Right ventricle myocardium inferior (tissue), 1 donor: ENCODE measurements at regions of chr1 and their contacts with region 1.

Region 1: DNA sequence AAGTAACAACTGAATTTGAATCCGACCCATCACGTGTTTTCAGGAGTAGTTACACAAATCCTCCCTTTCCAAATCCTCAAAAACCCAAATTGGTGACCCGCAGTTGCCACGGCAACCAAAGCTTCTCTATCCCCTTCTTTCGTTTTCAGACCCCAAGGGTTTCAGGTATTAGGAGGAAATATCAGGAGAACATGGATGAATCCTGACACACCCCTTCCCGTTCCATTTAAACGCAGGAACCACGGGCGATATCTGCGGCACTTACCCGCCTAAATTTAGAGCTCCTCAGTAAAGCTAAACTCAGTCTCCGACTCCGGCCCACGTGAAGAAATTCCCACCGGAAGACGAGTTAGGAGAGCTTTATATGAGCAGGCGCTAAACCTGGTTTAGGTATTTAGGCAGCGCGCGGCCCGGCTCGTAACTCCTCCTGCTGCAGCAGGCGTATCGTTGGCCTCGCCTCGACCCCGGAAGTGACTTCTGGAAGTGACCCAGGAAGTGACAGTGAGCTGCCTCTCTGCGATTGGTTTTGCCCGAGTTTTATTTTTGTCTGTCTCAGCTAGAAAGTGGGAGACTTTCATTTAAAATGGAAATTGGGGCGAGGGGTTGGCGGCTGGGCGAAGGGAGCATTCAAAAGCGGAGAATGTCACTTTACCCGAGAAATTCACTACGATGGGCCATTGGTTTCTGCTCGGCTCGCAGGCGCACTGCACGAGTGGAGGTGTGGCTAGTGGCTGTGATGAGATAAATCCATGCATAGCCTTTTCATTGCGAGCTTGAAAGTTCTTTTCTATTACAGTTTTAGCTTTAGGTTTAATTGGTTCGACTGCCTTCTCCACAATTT is at the start of gene TAF1A:
- DNase-seq: peak; percentile 96
- ATAC-seq: peak; percentile 95
- total RNA-seq, gene TAF1A: 1.7 TPM

Region 2: DNA sequence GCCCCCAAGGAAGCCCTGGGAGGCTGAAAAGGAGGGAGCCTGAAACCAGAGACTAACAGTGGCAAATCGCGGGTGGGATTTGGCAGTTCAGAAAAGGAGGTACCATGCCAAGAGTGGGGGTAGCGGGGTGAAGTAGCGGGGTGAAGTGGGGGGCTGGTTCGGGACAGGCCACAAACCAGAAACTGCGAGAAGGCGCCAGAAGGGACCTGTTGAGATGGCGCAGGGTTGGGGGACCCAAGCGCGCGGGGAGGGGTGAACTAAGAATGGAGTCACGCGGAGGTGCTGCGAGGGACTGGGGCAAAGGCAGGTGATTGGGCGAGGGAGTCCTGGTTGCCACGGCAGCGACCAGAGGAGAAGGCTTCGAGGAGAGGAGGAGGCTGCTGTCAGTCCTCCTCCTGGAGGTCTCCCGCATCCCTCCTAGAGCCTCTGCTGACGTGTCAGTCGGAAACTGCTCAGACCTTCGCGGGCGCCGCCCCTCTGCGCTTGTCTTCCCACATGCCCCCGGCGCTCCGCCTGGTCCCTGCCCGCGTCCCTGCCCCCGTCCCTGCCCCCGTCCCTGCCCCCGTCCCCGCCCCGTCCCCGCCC is 27.8 kb after region 1 on chr1:
- intact Hi-C with region 1: loop called (anchors 2 kb)
- DNase-seq: peak; percentile 96
- ATAC-seq: peak; percentile 96

Region 3: DNA sequence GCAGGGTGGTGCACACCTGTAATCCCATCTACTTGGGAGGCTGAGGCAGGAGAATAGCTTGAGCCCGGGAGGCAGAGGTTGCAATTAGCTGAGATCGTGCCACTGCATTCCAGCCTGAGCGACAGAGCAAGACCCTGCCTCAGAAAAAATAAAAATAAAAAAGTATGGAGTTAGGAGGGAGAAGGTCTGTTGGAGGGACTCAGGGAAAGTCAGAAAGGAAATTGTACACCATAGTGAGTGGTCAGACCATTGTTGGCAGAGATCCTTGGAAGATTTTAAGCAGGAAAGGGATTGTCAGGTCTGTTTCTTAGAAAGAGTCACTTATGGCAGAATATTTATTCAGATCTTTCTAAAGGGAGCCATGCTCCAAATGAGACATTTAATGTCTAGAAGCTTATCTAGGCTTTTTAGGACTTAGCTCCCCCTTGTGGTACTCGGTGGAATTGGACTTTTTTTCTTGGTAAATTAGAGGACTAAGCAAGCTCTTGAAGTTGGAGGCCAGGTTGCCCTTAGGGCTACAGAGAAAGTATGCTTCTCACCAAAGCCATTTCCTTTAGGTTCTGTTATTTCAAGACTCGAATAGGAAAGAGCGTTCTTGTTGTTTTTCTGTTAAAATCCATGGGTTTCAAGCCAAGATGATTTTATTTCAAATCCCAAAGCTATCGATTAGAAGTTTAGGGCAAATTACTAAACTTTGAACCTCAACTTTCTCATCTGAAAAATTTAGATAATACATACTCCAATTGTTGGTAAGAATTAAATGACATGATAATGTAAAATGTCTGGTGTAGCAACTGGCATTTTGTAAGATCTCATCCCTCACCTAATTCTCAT is 44.7 kb after region 1 on chr1:
- intact Hi-C with region 1: loop called (anchors 5 kb)
- DNase-seq: no peak
- ATAC-seq: peak; percentile 60